WTC11 (cell line): ENCODE measurements at regions of chr4 and their contacts with region 1.

Region 1: DNA sequence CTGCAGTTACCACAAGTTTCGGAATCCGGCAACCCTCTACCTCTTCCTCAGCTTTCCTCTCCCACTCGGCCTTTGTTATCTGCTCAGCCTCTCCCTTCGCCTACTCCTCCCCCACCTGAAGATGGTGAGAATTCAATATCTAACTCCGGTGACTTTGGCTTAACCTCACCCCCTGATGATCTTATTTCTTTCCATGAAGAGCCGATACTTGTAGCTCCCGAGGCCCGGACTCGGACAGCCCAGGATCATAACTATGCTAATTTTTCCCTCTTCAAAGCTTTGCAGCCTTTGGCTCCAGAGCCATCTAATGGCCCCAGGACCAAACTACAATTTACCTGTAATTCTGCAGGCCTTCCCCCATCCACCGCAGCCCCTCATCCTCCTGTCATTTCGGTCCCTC is 32.0 kb upstream of the MGST2 start:
- DNase-seq: peak; percentile 48
- ATAC-seq: peak; percentile 90
- H3K4me3 Mint-ChIP-seq: peak overlapping the region; percentile 71
- H3K27ac Mint-ChIP-seq: no peak overlapping the region
- H3K4me1 Mint-ChIP-seq: peaks cover 22% of the 10 kb centered on the region
- H3K27me3 Mint-ChIP-seq: peaks cover 75% of the 10 kb centered on the region
- CTCF ChIP-seq: 0 out of 2 replicates have a peak, but pooled peaks have one; percentile 22

Region 2: DNA sequence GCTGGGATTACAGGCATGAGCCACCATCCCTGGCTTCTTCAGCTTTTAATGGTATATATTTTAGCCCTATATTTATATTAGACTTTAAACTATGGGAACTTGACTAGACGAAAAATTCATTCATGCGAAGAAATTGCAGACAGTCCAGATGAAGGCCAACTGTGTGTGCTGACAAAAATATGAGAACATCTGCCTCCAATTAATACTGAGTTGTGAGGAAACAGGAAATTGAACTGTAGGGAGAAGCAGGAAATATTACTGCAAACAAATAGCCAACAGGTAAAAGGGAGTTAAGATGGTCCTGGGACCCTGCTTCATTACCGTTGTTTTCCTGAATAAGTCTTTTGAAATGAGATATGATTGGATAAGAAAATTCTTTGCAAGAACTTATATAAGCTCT is 379.9 kb before region 1 on chr4:
- CTCF ChIA-PET with region 1: no interaction called
- POLR2A ChIA-PET with region 1: no interaction called
- DNase-seq: no peak
- ATAC-seq: no peak
- H3K4me3 Mint-ChIP-seq: no peak overlapping the region
- H3K27ac Mint-ChIP-seq: no peak overlapping the region
- H3K4me1 Mint-ChIP-seq: peaks cover 2% of the 10 kb centered on the region; the same call in 1 of the 2 replicates
- H3K27me3 Mint-ChIP-seq: no peaks in the 10 kb centered on the region
- CTCF ChIP-seq: no peak

Region 3: DNA sequence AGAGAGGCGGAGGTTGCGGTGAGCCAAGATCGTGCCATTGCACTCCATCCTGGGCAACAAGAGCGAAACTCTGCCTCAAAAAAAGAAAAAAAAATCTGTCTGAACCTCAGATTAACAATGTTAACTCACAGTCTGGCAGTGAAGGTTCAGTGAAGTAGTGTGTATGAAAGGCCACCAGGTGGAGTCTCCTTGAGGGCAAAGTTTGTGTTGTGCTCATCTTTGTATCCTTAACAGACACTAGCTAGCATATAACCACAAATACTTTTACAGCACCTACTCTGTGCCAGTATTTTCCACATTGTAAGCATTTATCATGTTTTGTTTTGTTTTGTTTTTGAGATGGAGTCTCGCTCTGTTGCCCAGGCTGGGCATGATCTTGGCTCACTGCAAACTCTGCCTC is 14.0 kb before region 1 on chr4:
- CTCF ChIA-PET with region 1: interaction called, 40 read pairs
- POLR2A ChIA-PET with region 1: no interaction called
- DNase-seq: no peak
- ATAC-seq: peak; percentile 88
- H3K4me3 Mint-ChIP-seq: no peak overlapping the region
- H3K27ac Mint-ChIP-seq: no peak overlapping the region
- H3K4me1 Mint-ChIP-seq: peaks cover 19% of the 10 kb centered on the region
- H3K27me3 Mint-ChIP-seq: peaks cover 60% of the 10 kb centered on the region
- CTCF ChIP-seq: peak; percentile 40; the same call in 1 of the 2 replicates